ENCODE measurements at regions of chr3 and their contacts with region 1.

Region 1: GRCh38 chr3:191235331-191236314 is 36.6 kb downstream of the OSTN start:
- DNase-seq: no peak
- H3K4me3 ChIP-seq: no peak overlapping the region
- H3K27ac ChIP-seq: no peak overlapping the region
- H3K4me1 ChIP-seq: no peaks in the 10 kb centered on the region
- H3K27me3 ChIP-seq: no peaks in the 10 kb centered on the region
- CTCF ChIP-seq: no peak

Region 2: GRCh38 chr3:190959077-190959476 is 276.5 kb before region 1 on chr3:
- intact Hi-C with region 1: no loop called
- DNase-seq: no peak
- H3K4me3 ChIP-seq: no peak overlapping the region
- H3K27ac ChIP-seq: no peak overlapping the region
- H3K4me1 ChIP-seq: no peaks in the 10 kb centered on the region
- H3K27me3 ChIP-seq: no peaks in the 10 kb centered on the region
- CTCF ChIP-seq: no peak

Region 3: DNA sequence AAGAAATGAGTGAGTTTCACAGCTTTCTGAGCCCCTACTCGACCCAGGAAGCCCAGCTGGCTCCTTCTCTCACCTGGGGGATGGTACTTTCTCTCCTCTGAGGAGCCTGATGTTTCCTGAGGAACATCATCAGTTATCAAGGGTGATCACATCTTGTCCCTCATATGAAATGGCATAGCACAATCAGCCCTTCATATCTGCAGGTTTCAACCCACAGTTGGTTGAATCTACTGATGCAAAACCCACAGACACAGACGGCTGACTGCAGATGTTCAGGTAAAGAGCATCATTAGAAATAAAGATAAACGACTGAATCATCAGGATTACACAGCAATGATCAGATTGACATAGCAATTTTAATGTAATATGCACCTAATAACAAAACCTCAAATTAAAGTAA is 130.2 kb before region 1 on chr3:
- intact Hi-C with region 1: no loop called
- DNase-seq: no peak
- H3K4me3 ChIP-seq: no peak overlapping the region
- H3K27ac ChIP-seq: no peak overlapping the region
- H3K4me1 ChIP-seq: no peaks in the 10 kb centered on the region
- H3K27me3 ChIP-seq: no peaks in the 10 kb centered on the region
- CTCF ChIP-seq: no peak

Region 4: GRCh38 chr3:191290311-191291025 is 54.8 kb after region 1 on chr3:
- intact Hi-C with region 1: no loop called
- DNase-seq: no peak
- H3K4me3 ChIP-seq: no peak overlapping the region
- H3K27ac ChIP-seq: no peak overlapping the region
- H3K4me1 ChIP-seq: no peaks in the 10 kb centered on the region
- H3K27me3 ChIP-seq: no peaks in the 10 kb centered on the region
- CTCF ChIP-seq: no peak

Region 5: GRCh38 chr3:191388823-191389222 is 153.2 kb after region 1 on chr3:
- intact Hi-C with region 1: loop called (anchors 10 kb)
- DNase-seq: no peak
- H3K4me3 ChIP-seq: no peak overlapping the region
- H3K27ac ChIP-seq: no peak overlapping the region
- H3K4me1 ChIP-seq: no peaks in the 10 kb centered on the region
- H3K27me3 ChIP-seq: no peaks in the 10 kb centered on the region
- CTCF ChIP-seq: no peak